ENCODE measurements at regions of chr2 and their contacts with region 1.

Region 1: DNA sequence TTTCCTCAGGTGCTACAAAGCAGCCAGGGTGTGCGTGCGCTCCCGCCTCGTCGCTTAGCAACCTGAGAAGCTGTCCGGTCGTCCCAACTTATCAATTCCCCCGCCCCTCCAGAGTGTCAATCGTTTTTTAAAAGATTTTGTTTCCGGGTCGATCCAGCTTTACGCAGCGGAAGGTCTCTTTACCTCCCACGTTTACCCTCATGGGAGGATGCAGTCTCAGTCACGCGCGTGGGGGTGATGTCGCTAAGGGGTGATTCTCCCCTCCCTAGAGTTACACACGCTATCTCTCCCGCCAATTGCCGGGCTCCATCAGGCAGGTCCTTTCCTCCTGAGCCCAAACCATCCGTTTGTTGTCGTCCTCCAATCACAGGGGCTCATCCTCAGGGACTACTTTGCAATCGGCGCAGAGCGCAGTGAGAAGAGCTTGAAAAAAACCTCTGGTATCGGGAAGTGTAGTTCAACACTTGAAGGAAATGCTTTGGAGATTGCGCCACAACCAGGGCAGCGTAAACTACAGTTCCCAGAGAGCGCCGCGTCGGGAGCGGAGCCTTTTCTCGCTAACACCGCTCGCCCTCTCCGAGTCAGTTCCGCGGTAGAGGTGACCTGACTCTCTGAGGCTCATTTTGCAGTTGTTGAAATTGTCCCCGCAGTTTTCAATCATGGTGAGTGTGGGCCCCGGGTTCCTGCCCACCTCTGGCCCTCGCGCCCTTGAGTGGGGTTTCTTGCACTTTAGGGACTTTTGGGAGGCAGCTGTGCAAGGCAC is at the starts of genes MDH1 and WDPCP:
- DNase-seq: peak; percentile 98
- ATAC-seq: peak; percentile 84
- H3K4me3 ChIP-seq: peak within 1 kb of the TSS; percentile 93 to 98 (median 94)
- H3K4me3 Mint-ChIP-seq: peak within 1 kb of the TSS; percentile 91
- H3K27ac ChIP-seq: peak within 1 kb of the TSS; percentile 93 to 94
- H3K27ac Mint-ChIP-seq: peak within 1 kb of the TSS; percentile 93
- H3K4me1 ChIP-seq: peaks cover 14 to 19% of the 10 kb centered on the region in 2 donors
- H3K4me1 Mint-ChIP-seq: peaks cover 37% of the 10 kb centered on the region
- H3K27me3 ChIP-seq: no peaks in the 10 kb centered on the region
- H3K27me3 Mint-ChIP-seq: no peaks in the 10 kb centered on the region
- CTCF ChIP-seq: no peak
- total RNA-seq, gene MDH1: 87.8 and 95.6 TPM in 2 replicates
- total RNA-seq, gene WDPCP: 22.8 and 31.4 TPM in 2 replicates

Region 2: DNA sequence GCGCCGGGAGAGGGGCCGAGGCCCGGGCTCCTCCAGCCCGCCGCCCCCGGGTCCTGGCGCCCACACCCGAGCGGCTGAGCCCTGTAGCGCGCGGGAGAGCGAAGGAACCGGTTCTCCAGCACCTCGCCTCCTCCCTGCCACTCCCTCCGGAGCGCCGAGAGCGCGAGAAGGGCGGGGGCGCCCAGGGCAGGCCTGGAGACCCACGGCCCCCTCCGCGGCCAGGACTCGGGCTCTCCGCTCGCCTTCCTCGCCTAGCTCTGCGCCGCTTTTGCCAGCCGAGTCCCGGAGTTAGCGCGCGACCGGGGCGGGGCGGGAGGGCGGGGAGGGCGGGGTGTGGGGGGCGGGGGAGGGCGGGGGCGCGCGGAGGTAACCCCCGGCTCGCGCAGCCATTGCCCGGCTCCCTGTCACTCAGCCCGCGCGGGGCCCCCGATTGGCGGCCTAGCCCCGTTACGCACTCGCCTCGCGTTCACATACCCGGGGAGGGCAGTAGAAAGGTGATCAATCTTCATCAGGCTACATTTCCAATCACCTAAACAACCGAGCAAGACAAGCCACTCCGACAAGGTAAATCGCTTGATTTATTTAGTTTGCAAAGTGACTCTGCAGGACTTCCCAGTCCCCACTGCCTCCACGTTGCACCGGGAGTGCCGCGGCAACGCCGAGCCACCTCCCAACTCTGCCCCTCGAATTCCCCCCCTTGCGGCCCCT is 538.1 kb before region 1 on chr2 and contains the start of gene OTX1:
- CTCF ChIA-PET with region 1: no interaction called
- POLR2A ChIA-PET with region 1: no interaction called
- intact Hi-C with region 1: loop called (anchors 5 kb)
- DNase-seq: peak; percentile 66
- ATAC-seq: peak; percentile 75
- H3K4me3 ChIP-seq: peak within 1 kb of the TSS; percentile 47 to 66 (median 48)
- H3K4me3 Mint-ChIP-seq: peak within 1 kb of the TSS; percentile 85
- H3K27ac ChIP-seq: no peak within 1 kb of the TSS
- H3K27ac Mint-ChIP-seq: peak within 1 kb of the TSS; percentile 7
- H3K4me1 ChIP-seq: peaks cover 84 to 86% of the 10 kb centered on the region in 2 donors
- H3K4me1 Mint-ChIP-seq: peaks cover 71% of the 10 kb centered on the region
- H3K27me3 ChIP-seq: peaks cover 1 to 96% (median 85%) of the 10 kb centered on the region in 4 experiments
- H3K27me3 Mint-ChIP-seq: peaks cover 83% of the 10 kb centered on the region
- CTCF ChIP-seq: no peak
- total RNA-seq, gene OTX1: not detected in 2 replicates

Region 3: GRCh38 chr2:63614983-63615945 is 26.7 kb after region 1 on chr2:
- CTCF ChIA-PET with region 1: no interaction called
- POLR2A ChIA-PET with region 1: no interaction called
- intact Hi-C with region 1: no loop called
- DNase-seq: no peak
- ATAC-seq: no peak
- H3K4me3 ChIP-seq: no peak overlapping the region
- H3K4me3 Mint-ChIP-seq: no peak overlapping the region
- H3K27ac ChIP-seq: no peak overlapping the region
- H3K27ac Mint-ChIP-seq: no peak overlapping the region
- H3K4me1 ChIP-seq: no peaks in the 10 kb centered on the region
- H3K4me1 Mint-ChIP-seq: no peaks in the 10 kb centered on the region
- H3K27me3 ChIP-seq: no peaks in the 10 kb centered on the region
- H3K27me3 Mint-ChIP-seq: peaks cover 4% of the 10 kb centered on the region
- CTCF ChIP-seq: no peak

Region 4: DNA sequence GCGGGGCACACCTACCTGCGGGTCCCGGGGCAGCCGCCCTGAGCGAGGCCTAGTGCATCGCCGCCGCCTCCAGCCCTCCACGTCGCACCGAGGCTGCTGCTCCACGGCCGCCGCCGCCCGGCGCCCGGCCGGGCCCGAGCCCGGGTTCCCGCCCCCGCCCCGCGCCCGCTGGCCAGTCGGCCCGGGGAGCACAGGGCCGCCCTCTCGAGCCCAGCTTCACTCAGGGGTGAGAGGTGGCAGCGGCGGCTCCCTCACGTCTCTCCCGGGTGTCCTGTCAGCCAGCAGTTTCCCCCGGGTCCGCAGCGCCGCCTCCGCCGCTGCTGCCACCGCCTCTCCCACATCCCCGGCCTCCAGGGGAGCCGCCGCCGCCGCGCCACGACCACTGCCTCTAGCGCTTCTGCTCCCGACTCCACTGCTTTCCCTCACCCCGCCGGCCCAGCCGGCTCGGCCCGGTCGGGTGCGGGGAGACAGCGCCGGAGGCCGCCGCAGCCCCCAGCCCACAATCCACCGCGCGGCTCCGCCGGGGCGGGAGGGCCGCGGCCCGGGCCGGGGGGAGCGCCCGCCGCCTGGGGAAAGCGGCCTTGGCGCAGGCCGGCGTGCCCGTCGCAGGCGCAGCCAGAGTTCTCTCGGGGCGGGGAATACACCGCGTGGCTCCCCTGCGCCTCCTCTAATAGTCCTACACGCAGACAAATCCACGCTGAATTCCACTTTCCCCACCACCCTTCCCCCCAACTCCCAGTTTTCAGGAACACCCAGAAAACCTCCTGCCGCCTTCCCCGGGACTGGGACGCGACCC is 430.6 kb after region 1 on chr2 and contains the start of gene VPS54:
- CTCF ChIA-PET with region 1: no interaction called
- POLR2A ChIA-PET with region 1: no interaction called
- intact Hi-C with region 1: loop called (anchors 5 kb)
- DNase-seq: peak; percentile 79
- ATAC-seq: peak; percentile 79
- H3K4me3 ChIP-seq: peak within 1 kb of the TSS; percentile 44 to 93 (median 77)
- H3K4me3 Mint-ChIP-seq: peak within 1 kb of the TSS; percentile 98
- H3K27ac ChIP-seq: peak within 1 kb of the TSS; percentile 52 to 77
- H3K27ac Mint-ChIP-seq: peak within 1 kb of the TSS; percentile 97
- H3K4me1 ChIP-seq: peaks cover 13 to 20% of the 10 kb centered on the region in 2 donors
- H3K4me1 Mint-ChIP-seq: peaks cover 34% of the 10 kb centered on the region
- H3K27me3 ChIP-seq: no peaks in the 10 kb centered on the region
- H3K27me3 Mint-ChIP-seq: no peaks in the 10 kb centered on the region
- CTCF ChIP-seq: no peak
- total RNA-seq, gene VPS54: 13.2 and 14.4 TPM in 2 replicates